Activated CD4-positive, alpha-beta memory T cell treated with anti-CD3 and anti-CD28 coated beads for 36 hours (primary cell): ENCODE measurements at regions of chr2 and their contacts with region 1.

Region 1: DNA sequence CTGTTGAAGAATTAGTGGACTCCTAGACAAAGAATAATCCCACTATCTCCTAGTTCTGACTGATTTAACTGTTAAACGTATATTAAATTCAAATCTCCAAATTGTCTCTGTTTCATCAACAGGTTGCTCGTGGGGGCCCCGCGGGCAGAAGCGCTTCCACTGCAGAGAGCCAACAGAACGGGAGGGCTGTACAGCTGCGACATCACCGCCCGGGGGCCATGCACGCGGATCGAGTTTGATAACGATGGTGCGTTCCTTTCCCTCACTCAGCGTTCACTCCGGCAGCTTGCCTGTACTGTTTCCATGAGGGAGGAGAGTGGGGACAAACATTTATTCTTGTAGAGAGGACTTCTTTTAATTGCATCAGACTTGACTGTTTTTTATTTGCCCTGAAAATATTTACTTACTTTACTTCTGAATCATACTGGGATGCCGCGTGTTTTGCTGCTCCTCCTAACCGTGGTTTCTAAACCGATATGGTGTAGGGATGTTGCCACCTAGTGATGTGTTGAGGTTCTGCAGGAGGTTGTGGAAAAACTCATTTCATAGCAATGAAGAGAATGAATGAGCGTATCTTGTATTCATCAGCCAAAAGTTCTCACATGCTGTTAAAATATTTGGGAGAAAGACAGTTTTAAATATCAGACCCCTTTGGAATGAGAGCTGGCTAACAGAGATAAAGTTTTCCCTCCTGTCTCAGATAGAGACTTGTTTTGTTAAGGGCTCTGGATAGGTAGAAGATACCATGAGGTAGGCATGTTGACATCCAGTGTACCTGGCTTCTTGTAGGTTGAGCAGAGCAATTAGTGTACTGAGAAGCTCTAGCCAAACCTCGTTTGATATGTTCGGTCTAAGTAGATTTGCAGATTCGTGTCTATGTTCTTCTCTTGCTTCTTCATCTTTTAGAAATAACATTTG is 38.3 kb downstream of the ITGA6 start:
- DNase-seq: peak; percentile 80
- H3K4me3 Mint-ChIP-seq: no peak overlapping the region
- H3K27ac Mint-ChIP-seq: peak overlapping the region; percentile 18
- H3K4me1 Mint-ChIP-seq: peaks cover 56% of the 10 kb centered on the region
- H3K27me3 Mint-ChIP-seq: no peaks in the 10 kb centered on the region

Region 2: GRCh38 chr2:171687287-171688128 is 778.2 kb before region 1 on chr2 and contains the start of gene DYNC1I2:
- CTCF ChIA-PET with region 1: no interaction called
- POLR2A ChIA-PET with region 1: no interaction called
- intact Hi-C with region 1: loop called (anchors 5 kb)
- DNase-seq: peak; percentile 88
- H3K4me3 Mint-ChIP-seq: peak within 1 kb of the TSS; percentile 89
- H3K27ac Mint-ChIP-seq: peak within 1 kb of the TSS; percentile 85
- H3K4me1 Mint-ChIP-seq: peaks cover 20% of the 10 kb centered on the region
- H3K27me3 Mint-ChIP-seq: no peaks in the 10 kb centered on the region
- total RNA-seq, gene DYNC1I2: 54.2 to 55.8 TPM

Region 3: DNA sequence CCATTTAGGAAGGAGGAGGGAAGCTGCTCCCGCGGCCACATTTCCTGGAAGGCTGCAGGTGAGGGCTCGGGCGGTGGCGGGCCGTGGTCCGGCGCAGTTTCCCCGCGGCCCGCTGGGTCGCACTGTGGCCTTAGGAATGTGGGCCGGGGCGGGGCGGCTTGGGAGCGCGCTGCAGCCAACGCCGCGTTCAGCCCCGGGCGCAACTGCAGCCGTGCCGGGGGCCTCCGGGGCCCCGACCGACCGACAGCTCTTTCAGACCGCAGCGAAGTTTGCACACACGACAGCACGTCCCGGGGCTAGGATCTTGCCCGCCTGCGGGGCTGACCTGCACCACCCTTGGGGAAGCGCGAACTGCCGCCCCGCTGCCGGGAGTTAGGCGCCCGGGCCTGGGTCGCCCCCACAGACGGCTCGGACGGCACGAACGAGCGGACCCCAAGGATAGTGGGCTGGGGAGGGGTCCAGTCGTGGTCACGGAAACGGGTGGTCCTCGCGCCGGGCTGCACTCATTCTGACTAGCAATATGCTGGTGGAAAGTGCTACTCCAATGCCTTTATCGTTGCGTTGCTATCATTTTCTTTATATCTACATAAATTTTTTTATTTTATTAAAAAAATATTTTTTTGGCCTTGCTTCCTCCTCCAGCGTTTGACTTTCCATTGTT is 293.0 kb before region 1 on chr2:
- CTCF ChIA-PET with region 1: interaction called, 225 read pairs
- POLR2A ChIA-PET with region 1: interaction called, 3 read pairs
- intact Hi-C with region 1: loop called (anchors 1 kb)
- DNase-seq: peak; percentile 71
- H3K4me3 Mint-ChIP-seq: peak overlapping the region; percentile 58
- H3K27ac Mint-ChIP-seq: no peak overlapping the region
- H3K4me1 Mint-ChIP-seq: peaks cover 8% of the 10 kb centered on the region
- H3K27me3 Mint-ChIP-seq: peaks cover 3% of the 10 kb centered on the region

Region 4: DNA sequence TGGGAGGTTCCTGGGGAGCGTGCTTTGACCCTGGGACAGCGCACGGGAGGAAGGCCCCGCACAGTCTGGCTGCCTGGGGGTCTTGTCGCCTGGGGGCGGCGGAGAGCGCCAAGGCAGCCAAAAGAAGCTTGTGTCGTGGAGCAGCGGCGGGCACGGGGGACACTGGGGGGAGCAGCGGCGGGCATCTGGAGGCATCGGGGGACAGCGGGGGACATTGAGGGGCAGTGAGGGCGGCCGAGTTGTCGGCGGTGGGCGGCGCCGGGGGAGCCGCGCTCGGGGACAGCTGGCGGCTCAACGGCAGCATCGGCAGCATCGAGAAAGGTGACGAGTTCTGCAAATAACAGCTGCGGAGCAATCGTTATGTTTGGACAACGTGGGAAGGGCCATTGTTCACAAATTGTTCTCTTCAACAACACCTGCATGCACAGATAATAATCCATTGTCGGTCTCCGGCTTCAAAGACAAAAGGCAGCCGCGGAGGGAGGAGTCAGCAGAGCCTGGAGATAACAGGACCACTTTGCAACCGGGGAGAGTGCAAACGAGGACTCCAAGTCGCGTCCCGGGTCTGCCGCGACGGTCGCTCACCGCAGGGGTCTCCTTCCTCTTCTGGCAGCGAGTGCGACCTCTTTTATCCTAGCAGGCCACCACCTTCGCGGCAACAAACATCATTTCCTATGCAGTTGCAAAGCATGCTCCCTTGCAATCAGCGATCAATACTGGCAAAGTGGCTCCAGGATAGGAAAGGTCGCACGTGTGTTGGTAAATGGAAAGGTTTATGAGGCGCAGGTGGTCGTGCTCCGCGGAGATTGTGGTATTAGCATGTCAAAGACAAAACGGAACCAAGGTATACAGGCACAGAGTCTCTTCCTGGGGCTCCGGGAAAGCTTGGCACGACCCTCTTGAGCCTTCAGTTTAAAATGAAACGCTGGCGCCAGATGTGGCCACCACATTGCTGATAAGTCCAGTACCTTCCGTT is 230.7 kb before region 1 on chr2:
- CTCF ChIA-PET with region 1: interaction called, 12 read pairs
- POLR2A ChIA-PET with region 1: no interaction called
- intact Hi-C with region 1: no loop called
- DNase-seq: peak; percentile 33
- H3K4me3 Mint-ChIP-seq: peak overlapping the region; percentile 76
- H3K27ac Mint-ChIP-seq: no peak overlapping the region
- H3K4me1 Mint-ChIP-seq: peaks cover 25% of the 10 kb centered on the region
- H3K27me3 Mint-ChIP-seq: peaks cover 32% of the 10 kb centered on the region

Region 5: GRCh38 chr2:172427256-172427989 is 38.3 kb before region 1 on chr2 and contains the start of gene ITGA6:
- CTCF ChIA-PET with region 1: interaction called, 235 read pairs
- POLR2A ChIA-PET with region 1: interaction called, 7 read pairs
- intact Hi-C with region 1: loop called (anchors 1 kb)
- DNase-seq: peak; percentile 86
- H3K4me3 Mint-ChIP-seq: peak within 1 kb of the TSS; percentile 80
- H3K27ac Mint-ChIP-seq: peak within 1 kb of the TSS; percentile 56
- H3K4me1 Mint-ChIP-seq: peaks cover 77% of the 10 kb centered on the region
- H3K27me3 Mint-ChIP-seq: no peaks in the 10 kb centered on the region
- total RNA-seq, gene ITGA6: 8.2 to 8.6 TPM

Region 6: GRCh38 chr2:172643142-172643541 is 177.5 kb after region 1 on chr2:
- CTCF ChIA-PET with region 1: no interaction called
- POLR2A ChIA-PET with region 1: no interaction called
- intact Hi-C with region 1: no loop called
- DNase-seq: peak; percentile 16
- H3K4me3 Mint-ChIP-seq: no peak overlapping the region
- H3K27ac Mint-ChIP-seq: no peak overlapping the region
- H3K4me1 Mint-ChIP-seq: peaks cover 4% of the 10 kb centered on the region
- H3K27me3 Mint-ChIP-seq: peaks cover 12% of the 10 kb centered on the region

Region 7: DNA sequence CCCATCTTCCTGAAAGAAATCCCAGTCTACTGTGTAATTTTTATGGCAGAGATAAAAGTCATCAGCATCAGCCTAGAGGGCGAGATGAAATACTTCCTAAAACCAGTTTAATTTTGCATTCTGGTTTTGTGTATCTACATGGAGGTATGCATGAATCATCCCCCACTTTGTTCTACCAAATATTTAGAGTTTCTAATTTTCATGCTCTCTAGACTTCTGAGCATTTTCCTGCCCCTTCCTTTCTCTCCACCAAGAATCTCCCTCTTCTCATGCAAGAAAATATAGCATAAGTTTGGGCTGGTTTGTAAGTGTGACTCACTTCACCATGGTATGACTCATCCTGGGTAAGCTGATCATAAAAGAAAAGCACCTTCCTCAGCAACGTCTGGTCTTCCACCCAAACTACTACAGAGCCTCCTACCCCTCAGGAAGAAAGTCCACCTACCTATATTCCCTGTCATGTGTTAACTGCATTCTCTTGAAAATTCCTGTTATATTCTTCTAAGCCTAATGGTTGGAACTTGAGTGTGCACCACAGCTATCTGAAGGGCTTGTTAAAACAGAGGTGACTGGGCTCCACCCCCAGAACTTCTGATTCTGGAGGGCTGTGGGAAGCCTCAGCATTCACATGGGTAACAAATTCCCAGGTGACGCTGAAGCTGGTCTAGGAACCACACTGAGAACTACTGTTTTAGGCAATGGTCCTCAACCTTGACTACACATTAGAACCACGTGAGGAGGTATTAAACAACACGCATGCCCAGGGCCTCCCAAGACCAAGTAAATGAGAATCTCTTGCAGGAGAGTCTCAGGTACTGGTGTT is 232.6 kb after region 1 on chr2:
- CTCF ChIA-PET with region 1: interaction called, 3 read pairs
- POLR2A ChIA-PET with region 1: no interaction called
- intact Hi-C with region 1: loop called (anchors 10 kb)
- DNase-seq: peak; percentile 13
- H3K4me3 Mint-ChIP-seq: no peak overlapping the region
- H3K27ac Mint-ChIP-seq: no peak overlapping the region
- H3K4me1 Mint-ChIP-seq: peaks cover 19% of the 10 kb centered on the region
- H3K27me3 Mint-ChIP-seq: peaks cover 2% of the 10 kb centered on the region